Brain microvascular endothelial cell (primary cell): ENCODE measurements at regions of chr5 and their contacts with region 1.

Region 1: DNA sequence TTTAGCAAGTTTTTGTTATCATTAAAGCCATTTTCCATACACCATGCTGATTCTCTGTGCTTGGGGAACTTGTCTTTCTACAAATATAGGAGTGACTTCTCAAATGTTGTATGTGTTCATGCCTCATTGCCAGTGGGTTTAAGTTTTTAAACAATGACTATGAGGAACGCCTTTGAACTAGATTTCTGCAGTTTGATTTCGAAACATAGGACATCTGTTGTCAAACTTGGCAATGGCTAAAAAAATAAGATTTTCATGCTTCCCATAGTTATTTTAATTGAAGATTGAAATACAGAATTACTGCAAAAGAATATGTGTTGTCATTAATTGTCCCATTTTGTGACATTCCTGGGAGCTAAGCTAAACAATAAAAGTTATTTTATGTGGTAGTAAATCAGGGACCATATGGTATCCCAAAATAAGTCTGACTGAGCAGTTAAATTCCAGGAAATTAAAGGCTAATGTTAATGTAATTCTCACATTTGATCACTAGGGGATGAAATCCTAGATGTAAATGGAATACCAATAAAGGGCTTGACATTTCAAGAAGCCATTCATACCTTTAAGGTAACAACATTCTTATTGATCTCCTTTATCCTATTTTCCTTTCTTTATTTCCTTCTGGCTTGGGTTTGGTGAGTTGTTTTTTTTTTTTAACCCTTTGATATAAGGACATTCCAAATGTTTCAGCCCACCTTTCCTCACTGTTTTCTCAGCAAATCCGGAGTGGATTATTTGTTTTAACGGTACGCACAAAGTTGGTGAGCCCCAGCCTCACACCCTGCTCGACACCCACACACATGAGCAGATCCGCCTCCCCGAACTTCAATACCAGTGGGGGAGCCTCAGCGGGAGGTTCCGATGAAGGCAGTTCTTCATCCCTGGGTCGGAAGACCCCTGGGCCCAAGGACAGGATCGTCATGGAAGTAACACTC is 116.7 kb downstream of the GOLPH3 start:
- DNase-seq: no peak
- H3K4me3 ChIP-seq: no peak overlapping the region
- H3K27ac ChIP-seq: no peak overlapping the region
- H3K27me3 ChIP-seq: no peaks in the 10 kb centered on the region
- CTCF ChIP-seq: no peak

Region 2: GRCh38 chr5:31825518-31826068 is 231.8 kb before region 1 on chr5:
- in situ Hi-C with region 1: loop called (anchors 25 kb)
- DNase-seq: peak; percentile 61
- H3K4me3 ChIP-seq: no peak overlapping the region
- H3K27ac ChIP-seq: no peak overlapping the region
- H3K27me3 ChIP-seq: peaks cover 4% of the 10 kb centered on the region
- CTCF ChIP-seq: peak; percentile 78